ENCODE measurements at regions of chr1 and their contacts with region 1.

Region 1: DNA sequence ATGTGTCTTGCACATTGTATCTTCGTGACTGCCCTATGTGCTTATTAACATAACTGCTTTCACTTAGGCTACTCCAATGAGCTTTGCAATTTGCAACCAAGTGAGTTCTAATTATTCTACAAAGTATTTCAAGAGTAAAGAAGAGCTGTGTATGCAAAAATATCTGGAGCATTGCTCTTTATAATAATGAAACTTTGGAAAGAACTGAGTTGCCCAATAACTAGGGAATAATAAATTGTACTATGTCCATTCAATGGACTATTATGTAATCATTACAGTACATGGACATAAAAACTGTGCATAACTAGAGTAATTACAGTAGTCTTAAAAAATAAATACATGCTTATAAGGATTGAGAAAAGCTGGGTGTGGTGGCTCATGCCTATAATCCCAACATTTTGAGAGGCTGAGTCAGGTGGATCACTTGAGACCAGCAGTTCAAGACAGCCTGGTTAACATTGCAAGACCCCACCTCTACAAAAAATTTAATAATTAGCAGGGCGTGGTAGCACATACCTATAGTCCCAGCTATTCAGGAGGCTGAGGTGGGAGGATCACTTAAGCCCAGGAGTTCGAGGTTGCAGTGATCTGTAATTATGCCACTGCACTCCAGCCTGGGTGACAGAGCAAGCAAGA is 70.3 kb upstream of the JAK1 start:
- DNase-seq: no peak
- ATAC-seq: no peak
- H3K4me3 ChIP-seq: no peak overlapping the region
- H3K27ac ChIP-seq: no peak overlapping the region
- H3K4me1 ChIP-seq: peaks cover 24% of the 10 kb centered on the region
- H3K27me3 ChIP-seq: no peaks in the 10 kb centered on the region
- CTCF ChIP-seq: no peak

Region 2: DNA sequence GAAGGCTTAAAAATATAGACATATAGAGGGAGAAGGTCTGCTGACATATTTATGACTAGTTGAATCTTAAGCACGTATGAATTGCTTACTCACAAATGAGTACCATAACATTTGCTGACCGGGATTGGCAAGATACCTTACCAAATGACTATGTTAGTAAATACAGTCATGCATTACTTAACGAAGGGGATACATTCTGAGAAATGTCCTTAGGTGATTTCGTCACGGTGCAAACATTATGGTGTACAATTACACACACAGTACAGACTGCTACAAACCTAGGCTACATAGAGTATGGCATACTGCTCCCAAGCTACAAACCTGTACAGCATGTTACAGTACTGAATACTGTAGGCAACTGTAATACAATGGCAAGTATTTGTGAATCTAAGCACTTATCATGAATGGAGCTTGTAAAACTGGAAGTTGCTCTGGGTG is 852.6 kb before region 1 on chr1:
- intact Hi-C with region 1: loop called in 1 of 2 experiments (anchors 10 kb)
- DNase-seq: no peak
- ATAC-seq: peak; percentile 88 to 98 (median 94)
- H3K4me3 ChIP-seq: peak overlapping the region; percentile 33
- H3K27ac ChIP-seq: peak overlapping the region; percentile 62
- H3K4me1 ChIP-seq: peaks cover 9% of the 10 kb centered on the region
- H3K27me3 ChIP-seq: no peaks in the 10 kb centered on the region
- CTCF ChIP-seq: no peak

Region 3: DNA sequence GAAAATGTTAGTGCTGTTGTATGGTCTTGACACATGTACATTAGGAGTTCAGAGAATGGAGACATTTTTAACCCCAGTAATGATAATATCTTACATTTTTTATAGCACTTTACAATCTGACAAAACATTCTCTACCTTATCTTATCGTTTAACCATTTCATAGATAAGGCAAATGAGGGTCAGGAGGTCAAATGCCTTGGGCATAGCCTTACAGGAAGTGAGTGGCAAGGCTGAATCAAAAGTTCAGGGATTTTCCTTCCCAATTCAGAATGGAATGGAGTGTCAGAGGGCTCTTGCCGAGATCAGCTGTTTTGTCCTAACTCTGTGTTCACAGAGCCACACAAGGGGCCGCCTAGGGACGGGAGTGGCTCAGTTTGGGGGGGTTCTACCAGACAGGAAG is 53.7 kb after region 1 on chr1:
- intact Hi-C with region 1: no loop called
- DNase-seq: no peak
- ATAC-seq: no peak
- H3K4me3 ChIP-seq: no peak overlapping the region
- H3K27ac ChIP-seq: no peak overlapping the region
- H3K4me1 ChIP-seq: no peaks in the 10 kb centered on the region
- H3K27me3 ChIP-seq: no peaks in the 10 kb centered on the region
- CTCF ChIP-seq: no peak